Activated B cell treated with CpG ODN at 0.5 μM for 24 hours (primary cell): ENCODE measurements at regions of chr17 and their contacts with region 1.

Region 1: DNA sequence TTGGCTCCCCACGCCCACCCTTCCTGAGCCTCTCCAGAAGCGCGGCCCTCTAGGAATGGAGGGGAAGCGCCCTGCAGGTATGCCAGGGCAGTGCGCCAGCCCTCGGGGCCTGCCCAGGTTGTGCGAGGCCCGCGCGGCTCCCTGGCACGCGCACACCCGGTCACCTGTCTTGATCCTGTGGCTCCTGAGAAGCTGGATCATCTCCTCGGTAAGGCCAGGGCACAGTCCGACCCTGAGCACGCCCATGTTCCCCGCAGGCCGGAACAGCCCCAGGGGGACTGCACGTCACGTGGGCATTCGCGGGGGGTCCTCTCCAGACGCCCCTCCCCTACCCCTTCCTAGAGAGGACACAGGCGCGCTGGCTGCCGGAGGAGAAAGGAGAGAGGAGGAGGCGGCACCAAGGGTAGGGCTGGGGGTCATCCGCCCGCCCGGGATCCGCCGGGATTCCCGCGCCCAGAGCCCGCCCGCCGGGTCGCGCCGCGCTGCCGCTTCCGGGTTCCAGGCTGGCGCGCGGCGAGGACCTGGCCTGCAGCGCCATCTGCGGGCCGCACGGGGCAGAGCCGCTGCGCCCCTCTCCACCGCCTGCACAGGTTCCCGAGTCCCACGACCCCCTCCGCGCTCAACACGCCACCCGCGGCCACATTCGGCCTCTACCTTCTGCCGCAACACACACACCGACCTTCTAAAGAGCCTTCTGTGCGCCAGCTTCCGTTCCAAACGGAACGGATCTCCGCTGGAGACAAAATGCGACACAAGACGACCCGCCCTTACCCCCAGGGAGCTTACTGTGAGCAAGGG is at the start of gene RAD51D:
- DNase-seq: peak; percentile 88
- ATAC-seq: peak; percentile 92
- H3K4me3 Mint-ChIP-seq: peak within 1 kb of the TSS; percentile 91
- H3K27ac Mint-ChIP-seq: peak within 1 kb of the TSS; percentile 88
- H3K4me1 Mint-ChIP-seq: peaks cover 31% of the 10 kb centered on the region
- H3K27me3 Mint-ChIP-seq: peaks cover 2% of the 10 kb centered on the region
- CTCF ChIP-seq: peak; percentile 59
- total RNA-seq, gene RAD51D: 17.0 and 22.9 TPM in 2 replicates

Region 2: DNA sequence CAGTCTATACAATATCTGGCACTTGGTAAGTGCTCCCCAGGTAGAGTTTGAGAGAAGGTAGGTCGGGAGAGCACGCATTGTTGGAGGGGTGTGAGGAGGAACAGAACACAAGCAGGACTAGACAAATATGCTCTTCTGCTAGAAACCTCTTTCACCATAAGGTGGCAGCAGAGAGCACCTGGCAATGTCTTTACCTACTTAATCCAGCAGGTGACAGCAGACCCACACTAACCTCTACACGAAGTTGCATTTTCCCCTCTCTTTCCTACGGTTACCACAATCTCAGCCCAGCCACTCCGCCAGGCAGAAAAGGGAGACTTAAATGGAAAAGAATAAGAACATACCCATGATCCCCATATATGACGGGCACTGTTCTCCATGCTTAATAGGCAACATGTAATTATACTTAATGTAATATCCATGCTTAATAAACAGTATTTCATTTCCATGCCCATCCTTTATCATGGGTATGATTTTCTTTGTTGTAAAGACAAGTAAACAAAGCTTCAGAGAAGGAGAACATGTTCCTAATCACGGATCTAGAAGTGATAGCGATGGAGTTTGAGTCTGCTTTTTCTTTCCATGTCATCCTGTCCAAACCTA is 919.5 kb before region 1 on chr17:
- CTCF ChIA-PET with region 1: interaction called, 3 read pairs
- POLR2A ChIA-PET with region 1: no interaction called
- intact Hi-C with region 1: loop called (anchors 1 kb)
- DNase-seq: peak; percentile 25
- ATAC-seq: peak; percentile 93
- H3K4me3 Mint-ChIP-seq: no peak overlapping the region
- H3K27ac Mint-ChIP-seq: no peak overlapping the region
- H3K4me1 Mint-ChIP-seq: peaks cover 2% of the 10 kb centered on the region
- H3K27me3 Mint-ChIP-seq: peaks cover 27% of the 10 kb centered on the region
- CTCF ChIP-seq: peak; percentile 99

Region 3: DNA sequence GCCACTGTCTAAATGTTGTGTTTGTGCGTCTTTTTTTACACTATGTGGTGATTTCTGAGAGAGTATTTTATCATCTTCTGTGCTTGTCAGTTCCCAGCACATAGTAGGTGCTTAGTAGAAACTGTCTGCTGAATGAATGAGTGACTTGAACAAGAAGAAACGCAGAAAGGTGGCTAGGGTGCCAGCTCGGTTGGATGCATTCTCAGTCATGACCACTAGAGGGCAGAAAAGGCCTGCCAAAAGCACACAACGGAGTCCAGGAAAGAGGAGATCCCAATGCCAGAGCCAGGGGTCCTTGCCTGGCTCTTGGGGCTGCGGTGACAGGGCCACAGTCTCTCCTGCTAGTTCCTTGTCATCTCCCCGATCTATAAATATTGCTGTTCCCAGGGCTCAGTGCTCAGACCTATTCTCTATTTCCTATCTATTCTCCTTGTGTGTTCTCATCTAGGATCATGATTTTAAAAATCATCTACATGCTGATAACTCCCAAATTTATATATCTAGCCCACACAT is 699.3 kb before region 1 on chr17:
- CTCF ChIA-PET with region 1: interaction called, 34 read pairs
- POLR2A ChIA-PET with region 1: no interaction called
- intact Hi-C with region 1: loop called (anchors 1 kb)
- DNase-seq: peak; percentile 34
- ATAC-seq: peak; percentile 45
- H3K4me3 Mint-ChIP-seq: no peak overlapping the region
- H3K27ac Mint-ChIP-seq: no peak overlapping the region
- H3K4me1 Mint-ChIP-seq: peaks cover 2% of the 10 kb centered on the region
- H3K27me3 Mint-ChIP-seq: peaks cover 28% of the 10 kb centered on the region
- CTCF ChIP-seq: peak; percentile 99

Region 4: GRCh38 chr17:34542700-34543336 is 576.7 kb before region 1 on chr17:
- CTCF ChIA-PET with region 1: interaction called, 26 read pairs
- POLR2A ChIA-PET with region 1: interaction called, 4 read pairs
- intact Hi-C with region 1: loop called (anchors 1 kb)
- DNase-seq: no peak
- ATAC-seq: no peak
- H3K4me3 Mint-ChIP-seq: no peak overlapping the region
- H3K27ac Mint-ChIP-seq: no peak overlapping the region
- H3K4me1 Mint-ChIP-seq: no peaks in the 10 kb centered on the region
- H3K27me3 Mint-ChIP-seq: peaks cover 32% of the 10 kb centered on the region
- CTCF ChIP-seq: peak; percentile 86

Region 5: GRCh38 chr17:34980681-34981537 is 138.7 kb before region 1 on chr17:
- CTCF ChIA-PET with region 1: interaction called, 8 read pairs
- POLR2A ChIA-PET with region 1: interaction called, 6 read pairs
- intact Hi-C with region 1: loop called (anchors 1 kb)
- DNase-seq: peak; percentile 92
- ATAC-seq: peak; percentile 91
- H3K4me3 Mint-ChIP-seq: peak overlapping the region; percentile 88
- H3K27ac Mint-ChIP-seq: peak overlapping the region; percentile 87
- H3K4me1 Mint-ChIP-seq: peaks cover 32% of the 10 kb centered on the region
- H3K27me3 Mint-ChIP-seq: no peaks in the 10 kb centered on the region
- CTCF ChIP-seq: no peak

Region 6: DNA sequence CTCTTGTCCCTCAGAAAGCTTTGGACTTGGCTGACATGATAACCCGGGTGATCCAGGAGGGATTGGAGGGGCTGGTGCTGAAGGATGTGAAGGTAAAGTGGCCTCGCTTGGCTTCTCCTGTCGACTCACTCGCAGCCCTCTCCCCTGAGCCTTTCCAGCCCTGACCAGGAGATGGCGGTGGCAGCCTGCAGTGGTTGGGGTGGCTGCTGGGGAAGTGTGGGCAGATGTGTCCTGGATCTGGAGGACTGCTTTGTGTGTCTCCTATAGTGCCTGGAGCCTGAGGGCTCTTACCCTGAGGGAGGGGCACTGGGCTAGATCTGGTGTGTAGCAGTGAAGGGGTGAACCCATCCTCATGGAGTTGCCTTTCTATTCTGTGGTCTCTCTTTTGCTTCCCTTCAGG is 121.4 kb before region 1 on chr17:
- CTCF ChIA-PET with region 1: interaction called, 53 read pairs
- POLR2A ChIA-PET with region 1: interaction called, 3 read pairs
- intact Hi-C with region 1: loop called (anchors 1 kb)
- DNase-seq: peak; percentile 65
- ATAC-seq: peak; percentile 100
- H3K4me3 Mint-ChIP-seq: no peak overlapping the region
- H3K27ac Mint-ChIP-seq: peak overlapping the region; percentile 66
- H3K4me1 Mint-ChIP-seq: peaks cover 4% of the 10 kb centered on the region
- H3K27me3 Mint-ChIP-seq: no peaks in the 10 kb centered on the region
- CTCF ChIP-seq: no peak

Region 7: DNA sequence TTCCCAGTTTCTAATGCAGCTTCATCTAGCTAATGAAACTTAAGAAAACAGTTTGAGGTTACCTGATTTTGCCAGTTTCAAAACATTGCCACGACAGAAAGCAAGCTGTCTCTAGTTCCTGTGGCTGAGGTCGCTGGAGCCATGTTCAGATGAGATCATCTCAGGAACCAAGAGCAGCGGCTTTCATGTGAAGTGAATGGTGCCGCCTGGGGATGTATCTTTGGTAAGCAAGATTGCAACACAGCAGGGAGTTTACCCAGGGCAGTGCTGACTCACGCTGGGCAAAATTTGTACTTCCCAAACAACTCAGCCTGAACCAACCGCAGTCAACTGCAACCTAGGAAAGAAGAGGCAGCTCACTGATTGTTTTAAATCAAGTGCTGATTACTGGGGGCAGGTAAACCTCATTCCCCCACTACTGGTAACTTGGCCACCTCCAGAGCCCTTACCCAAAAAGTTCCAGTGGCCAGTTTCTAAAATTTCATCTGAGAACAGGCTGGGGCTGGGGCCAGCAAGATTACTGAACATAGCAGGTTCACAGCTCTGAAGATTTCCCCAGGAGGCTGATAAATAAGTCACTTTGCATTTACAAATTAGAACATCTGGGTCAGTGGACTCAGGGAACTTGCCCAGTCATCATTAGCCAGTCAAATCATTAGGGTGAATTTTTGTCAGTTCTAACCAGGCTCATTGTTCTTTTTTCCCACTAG is 55.9 kb before region 1 on chr17 and contains the start of gene RFFL:
- CTCF ChIA-PET with region 1: interaction called, 15 read pairs
- POLR2A ChIA-PET with region 1: no interaction called
- intact Hi-C with region 1: no loop called
- DNase-seq: peak; percentile 54
- ATAC-seq: peak; percentile 96
- H3K4me3 Mint-ChIP-seq: peak within 1 kb of the TSS; percentile 79
- H3K27ac Mint-ChIP-seq: peak within 1 kb of the TSS; percentile 92
- H3K4me1 Mint-ChIP-seq: peaks cover 32% of the 10 kb centered on the region
- H3K27me3 Mint-ChIP-seq: no peaks in the 10 kb centered on the region
- CTCF ChIP-seq: no peak
- total RNA-seq, gene RFFL: 31.5 and 34.1 TPM in 2 replicates

Region 8: GRCh38 chr17:35161281-35161761 is 41.8 kb after region 1 on chr17:
- CTCF ChIA-PET with region 1: no interaction called
- POLR2A ChIA-PET with region 1: no interaction called
- intact Hi-C with region 1: no loop called
- DNase-seq: no peak
- ATAC-seq: no peak
- H3K4me3 Mint-ChIP-seq: no peak overlapping the region
- H3K27ac Mint-ChIP-seq: no peak overlapping the region
- H3K4me1 Mint-ChIP-seq: no peaks in the 10 kb centered on the region
- H3K27me3 Mint-ChIP-seq: peaks cover 43% of the 10 kb centered on the region
- CTCF ChIP-seq: no peak

Region 9: GRCh38 chr17:35986643-35987042 is 867.1 kb after region 1 on chr17 and contains the start of gene CCL14:
- CTCF ChIA-PET with region 1: no interaction called
- POLR2A ChIA-PET with region 1: no interaction called
- intact Hi-C with region 1: no loop called
- DNase-seq: no peak
- ATAC-seq: no peak
- H3K4me3 Mint-ChIP-seq: no peak within 1 kb of the TSS
- H3K27ac Mint-ChIP-seq: no peak within 1 kb of the TSS
- H3K4me1 Mint-ChIP-seq: peaks cover 2% of the 10 kb centered on the region
- H3K27me3 Mint-ChIP-seq: peaks cover 5% of the 10 kb centered on the region
- CTCF ChIP-seq: no peak
- total RNA-seq, gene CCL14: not detected in 2 replicates